ENCODE measurements at regions of chr4 and their contacts with region 1.

Region 1: GRCh38 chr4:184263910-184264732 is 46.4 kb upstream of the ENPP6 start:
- DNase-seq: peak; percentile 97
- H3K4me3 Mint-ChIP-seq: no peak overlapping the region
- H3K27ac Mint-ChIP-seq: peak overlapping the region; percentile 11
- H3K4me1 Mint-ChIP-seq: peaks cover 52% of the 10 kb centered on the region
- H3K27me3 Mint-ChIP-seq: no peaks in the 10 kb centered on the region

Region 2: GRCh38 chr4:184237612-184238011 is 26.5 kb before region 1 on chr4:
- CTCF ChIA-PET with region 1: interaction called, 7 read pairs
- POLR2A ChIA-PET with region 1: interaction called, 4 read pairs
- intact Hi-C with region 1: loop called (anchors 1 kb)
- DNase-seq: peak; percentile 72
- H3K4me3 Mint-ChIP-seq: peak overlapping the region; percentile 33
- H3K27ac Mint-ChIP-seq: peak overlapping the region; percentile 86
- H3K4me1 Mint-ChIP-seq: peaks cover 34% of the 10 kb centered on the region
- H3K27me3 Mint-ChIP-seq: no peaks in the 10 kb centered on the region

Region 3: GRCh38 chr4:184310171-184310567 is 46.0 kb after region 1 on chr4:
- CTCF ChIA-PET with region 1: interaction called, 21 read pairs
- POLR2A ChIA-PET with region 1: interaction called, 4 read pairs
- intact Hi-C with region 1: loop called (anchors 2 kb)
- DNase-seq: peak; percentile 81
- H3K4me3 Mint-ChIP-seq: peak overlapping the region; percentile 4
- H3K27ac Mint-ChIP-seq: peak overlapping the region; percentile 72
- H3K4me1 Mint-ChIP-seq: peaks cover 52% of the 10 kb centered on the region
- H3K27me3 Mint-ChIP-seq: no peaks in the 10 kb centered on the region

Region 4: DNA sequence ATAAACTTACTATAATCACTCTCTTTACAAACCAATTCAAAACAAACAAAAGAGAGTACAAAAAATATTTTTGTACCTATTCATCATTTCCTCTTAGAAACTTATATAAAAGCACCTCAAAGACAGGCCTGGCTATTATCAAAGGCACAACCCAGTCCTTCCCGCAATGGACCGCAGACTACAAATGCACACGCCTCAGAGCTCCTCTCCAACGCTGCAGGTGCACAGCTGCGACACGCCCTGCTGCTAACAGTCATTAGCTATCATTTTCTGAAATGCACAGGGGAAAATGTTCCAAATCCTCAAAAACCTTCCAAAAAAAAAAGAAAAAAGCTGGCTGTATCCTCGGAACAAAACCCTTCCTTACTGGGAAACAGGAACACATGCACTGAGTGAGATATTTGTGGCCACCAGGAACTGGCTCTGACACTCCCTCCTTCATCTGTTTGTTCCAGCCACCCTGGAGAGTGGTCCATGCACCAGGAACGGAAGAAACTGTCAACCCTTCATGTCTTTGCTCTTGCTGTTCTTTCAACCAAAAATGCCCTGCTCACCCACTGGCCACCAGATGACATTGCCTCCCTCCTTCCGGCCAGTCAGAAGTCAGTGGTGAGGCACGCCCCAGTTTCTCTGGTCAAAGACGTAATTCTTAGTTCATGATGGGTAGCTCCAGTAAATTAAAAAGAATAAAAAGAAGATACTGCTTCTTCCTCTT is 193.6 kb after region 1 on chr4:
- CTCF ChIA-PET with region 1: interaction called, 10 read pairs
- POLR2A ChIA-PET with region 1: no interaction called
- intact Hi-C with region 1: no loop called
- DNase-seq: no peak
- H3K4me3 Mint-ChIP-seq: no peak overlapping the region
- H3K27ac Mint-ChIP-seq: no peak overlapping the region
- H3K4me1 Mint-ChIP-seq: peaks cover 74% of the 10 kb centered on the region
- H3K27me3 Mint-ChIP-seq: no peaks in the 10 kb centered on the region

Region 5: GRCh38 chr4:184538023-184538599 is 274.0 kb after region 1 on chr4:
- CTCF ChIA-PET with region 1: interaction called, 55 read pairs
- POLR2A ChIA-PET with region 1: interaction called, 8 read pairs
- intact Hi-C with region 1: loop called (anchors 1 kb)
- DNase-seq: peak; percentile 75
- H3K4me3 Mint-ChIP-seq: peak overlapping the region; percentile 95
- H3K27ac Mint-ChIP-seq: peak overlapping the region; percentile 96
- H3K4me1 Mint-ChIP-seq: peaks cover 38% of the 10 kb centered on the region
- H3K27me3 Mint-ChIP-seq: no peaks in the 10 kb centered on the region

Region 6: DNA sequence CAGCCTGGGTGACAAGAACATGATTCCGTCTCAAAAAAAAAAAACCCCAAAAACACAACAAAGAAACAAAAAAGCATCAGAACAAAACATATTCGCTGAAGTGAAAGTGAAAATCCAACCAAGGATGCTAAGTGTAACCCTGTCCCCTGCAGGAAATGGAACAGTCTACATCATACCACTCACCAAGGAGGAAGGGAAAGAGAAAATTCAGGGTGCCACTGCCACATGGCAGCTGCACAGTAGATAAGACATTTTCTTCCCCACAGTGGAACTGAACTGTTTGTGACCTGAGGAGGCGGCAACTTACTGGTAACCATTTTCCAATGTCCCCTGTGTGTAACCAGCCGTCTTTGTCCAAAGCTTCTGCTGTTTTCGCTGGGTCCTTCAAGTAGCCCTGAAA is 498.0 kb after region 1 on chr4:
- CTCF ChIA-PET with region 1: interaction called, 3 read pairs
- POLR2A ChIA-PET with region 1: no interaction called
- intact Hi-C with region 1: loop called (anchors 1 kb)
- DNase-seq: peak; percentile 54
- H3K4me3 Mint-ChIP-seq: peak overlapping the region; percentile 28
- H3K27ac Mint-ChIP-seq: peak overlapping the region; percentile 78
- H3K4me1 Mint-ChIP-seq: peaks cover 14% of the 10 kb centered on the region
- H3K27me3 Mint-ChIP-seq: no peaks in the 10 kb centered on the region

Measured in activated CD4-positive, alpha-beta memory T cell treated with anti-CD3 and anti-CD28 coated beads for 36 hours (primary cell).